Cardiac septum (tissue), 1 donor: ENCODE measurements at regions of chr12 and their contacts with region 1.

Region 1: GRCh38 chr12:32302218-32303173 is 96.9 kb upstream of the FGD4 start:
- DNase-seq: no peak

Region 2: GRCh38 chr12:31659087-31659933 is 643.2 kb before region 1 on chr12 and contains the start of gene ETFBKMT:
- intact Hi-C with region 1: loop called (anchors 10 kb)
- DNase-seq: peak; percentile 92
- total RNA-seq, gene ETFBKMT: 5.7 TPM

Region 3: GRCh38 chr12:31682136-31682962 is 620.1 kb before region 1 on chr12:
- intact Hi-C with region 1: loop called (anchors 10 kb)
- DNase-seq: peak; percentile 78

Region 4: DNA sequence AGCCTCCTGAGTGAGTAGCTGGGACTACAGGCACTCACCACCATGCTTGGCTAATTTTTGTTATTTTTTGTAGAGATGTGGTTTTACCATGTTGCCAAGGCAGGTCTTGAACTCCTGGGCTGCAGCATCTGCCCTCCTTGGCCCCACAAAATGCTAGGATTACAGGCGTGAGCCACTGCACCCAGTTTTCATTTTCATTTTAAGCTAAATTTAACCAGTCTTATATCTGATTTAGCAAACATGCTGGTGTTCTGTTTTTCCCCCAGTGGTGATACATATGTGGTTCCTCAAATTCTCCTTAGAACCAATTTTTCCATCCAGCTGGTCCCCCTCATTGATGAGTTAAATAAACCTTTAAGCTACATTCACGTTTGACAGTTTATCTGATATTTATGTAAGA is 239.6 kb before region 1 on chr12:
- intact Hi-C with region 1: loop called (anchors 5 kb)
- DNase-seq: no peak

Region 5: GRCh38 chr12:32365473-32366064 is 63.1 kb after region 1 on chr12:
- intact Hi-C with region 1: no loop called
- DNase-seq: no peak